Prostate gland (tissue), 2 donors: ENCODE measurements at regions of chr2 and their contacts with region 1.

Region 1: DNA sequence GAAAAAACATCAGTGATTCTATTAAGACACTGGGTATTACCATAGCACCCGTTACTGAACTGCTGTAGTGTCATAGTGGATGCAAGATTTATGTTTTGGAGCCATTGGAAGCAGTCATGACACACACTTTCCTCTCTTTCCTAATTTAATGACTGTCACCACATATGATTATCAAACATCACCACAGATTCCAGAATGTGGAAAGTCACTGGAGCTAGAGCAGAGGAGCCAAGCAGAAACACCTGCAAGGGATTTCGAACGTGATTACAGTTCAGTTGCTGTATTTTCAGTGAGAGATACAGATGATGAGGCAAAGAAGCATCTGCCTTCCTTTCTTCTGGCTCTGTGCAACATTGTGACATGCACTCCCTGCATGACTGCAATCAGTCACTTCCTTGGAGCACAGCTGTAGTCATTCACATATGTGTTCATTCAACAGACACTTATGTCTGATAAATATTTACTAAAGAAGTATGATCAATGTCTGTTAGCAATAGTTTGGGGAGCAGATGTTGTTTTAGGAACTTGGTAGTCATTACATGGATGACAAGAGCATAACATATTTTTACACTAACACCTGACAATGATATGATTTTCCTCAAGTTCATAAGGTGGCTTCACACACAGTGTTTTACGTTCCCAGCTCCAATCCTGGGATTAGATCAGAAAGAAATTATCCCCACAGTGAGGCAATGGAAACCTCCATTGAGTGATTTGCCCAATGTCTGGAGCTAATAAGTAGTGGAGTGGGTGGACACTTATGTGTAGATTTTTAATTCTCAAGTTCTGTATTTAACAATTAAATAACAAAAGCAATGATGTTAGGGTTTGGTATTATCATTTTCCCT is 416.6 kb downstream of the PLCL1 start:
- DNase-seq: no peak
- H3K4me3 ChIP-seq: no peak overlapping the region
- H3K27ac ChIP-seq: no peak overlapping the region
- H3K4me1 ChIP-seq: no peaks in the 10 kb centered on the region
- H3K27me3 ChIP-seq: no peaks in the 10 kb centered on the region
- CTCF ChIP-seq: no peak
- POLR2A ChIP-seq: no peak

Region 2: DNA sequence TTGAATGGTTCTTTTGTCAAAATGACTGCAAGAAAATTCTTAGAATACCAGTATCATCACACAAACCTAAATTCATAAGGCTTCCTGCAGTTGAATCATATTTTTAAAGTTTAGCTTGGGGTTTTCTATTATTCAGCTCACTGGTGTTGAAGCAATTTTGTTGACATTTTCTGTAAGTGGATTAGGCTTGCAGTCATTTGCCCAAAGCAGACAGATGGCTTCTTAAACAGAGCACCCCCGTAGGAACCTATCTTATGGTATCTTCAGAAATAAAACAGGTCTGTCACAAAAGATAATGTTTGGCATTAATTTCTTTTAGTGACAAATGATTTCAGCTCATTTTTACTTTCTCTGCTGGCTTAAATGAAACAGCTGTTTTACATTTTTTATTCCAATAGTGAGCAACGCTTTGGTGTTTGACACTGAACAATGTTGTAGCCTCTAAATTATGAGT is 85.5 kb before region 1 on chr2:
- intact Hi-C with region 1: loop called (anchors 10 kb)
- DNase-seq: no peak
- H3K4me3 ChIP-seq: no peak overlapping the region
- H3K27ac ChIP-seq: no peak overlapping the region
- H3K4me1 ChIP-seq: no peaks in the 10 kb centered on the region
- H3K27me3 ChIP-seq: no peaks in the 10 kb centered on the region
- CTCF ChIP-seq: no peak
- POLR2A ChIP-seq: no peak